Activated CD4-positive, alpha-beta T cell treated with anti-CD3 and anti-CD28 coated beads for 36 hours (primary cell): ENCODE measurements at regions of chr14 and their contacts with region 1.

Region 1: GRCh38 chr14:70809543-70810244 is 381 bp upstream of the MAP3K9 start:
- DNase-seq: peak; percentile 96
- ATAC-seq: peak; percentile 87
- H3K4me3 Mint-ChIP-seq: no peak overlapping the region
- H3K27ac Mint-ChIP-seq: peak overlapping the region; percentile 20
- H3K4me1 Mint-ChIP-seq: peaks cover 4% of the 10 kb centered on the region
- H3K27me3 Mint-ChIP-seq: no peaks in the 10 kb centered on the region

Region 2: DNA sequence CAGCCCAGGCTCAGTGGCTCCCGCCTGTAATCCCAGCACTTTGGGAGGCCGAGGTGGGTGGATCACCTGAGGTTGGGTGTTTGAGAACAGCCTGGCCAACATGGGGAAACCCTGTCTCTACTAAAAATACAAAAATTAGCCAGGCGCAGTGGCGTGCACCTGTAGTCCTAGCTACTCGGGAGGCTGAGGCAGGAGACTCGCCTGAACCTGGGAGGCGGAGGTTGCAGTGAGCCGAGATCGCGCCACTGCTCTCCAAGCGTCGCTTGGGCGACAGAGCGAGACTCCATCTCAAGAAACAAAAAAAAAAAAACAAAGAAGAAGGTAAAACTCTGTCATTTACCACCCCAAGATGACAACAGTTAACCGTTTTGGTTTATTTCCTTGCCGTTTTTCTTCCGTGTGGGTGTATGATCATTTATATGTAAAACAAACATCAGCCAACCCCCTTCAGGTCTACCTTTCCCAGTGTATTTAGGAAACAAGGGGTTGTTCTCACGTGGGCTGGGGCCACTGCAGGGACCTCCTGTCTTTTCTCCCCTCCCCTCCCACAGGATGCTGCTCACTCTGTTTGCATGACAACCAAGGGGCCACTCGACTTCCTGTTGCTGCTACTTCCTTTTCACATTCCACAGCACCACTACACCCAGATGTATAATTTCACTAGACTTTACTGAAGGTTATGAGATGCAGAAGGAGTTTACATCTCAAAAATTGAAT is 154.4 kb before region 1 on chr14:
- CTCF ChIA-PET with region 1: no interaction called
- POLR2A ChIA-PET with region 1: no interaction called
- intact Hi-C with region 1: loop called (anchors 1 to 5 kb)
- DNase-seq: peak; percentile 82
- ATAC-seq: peak; percentile 80
- H3K4me3 Mint-ChIP-seq: peak overlapping the region; percentile 76
- H3K27ac Mint-ChIP-seq: peak overlapping the region; percentile 99
- H3K4me1 Mint-ChIP-seq: peaks cover 90% of the 10 kb centered on the region
- H3K27me3 Mint-ChIP-seq: no peaks in the 10 kb centered on the region

Region 3: DNA sequence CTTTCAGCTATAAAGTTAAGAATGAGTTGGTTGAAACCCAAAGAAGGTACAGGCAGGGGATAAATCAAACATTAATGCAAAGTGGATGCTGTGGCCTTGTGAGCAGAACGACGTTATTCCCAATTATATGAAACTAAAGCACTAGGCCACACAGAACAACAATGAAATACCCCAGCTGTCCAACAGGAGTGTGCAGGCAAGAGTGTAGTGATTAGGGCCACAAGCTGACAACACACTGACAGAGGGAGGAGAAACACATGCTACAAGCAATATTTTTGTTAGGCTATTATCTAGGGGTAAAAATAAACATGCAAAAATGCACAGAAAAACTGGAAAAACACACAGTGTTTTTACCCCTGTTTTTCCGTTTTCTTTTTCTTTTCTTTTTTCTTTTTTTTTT is 15.4 kb before region 1 on chr14:
- CTCF ChIA-PET with region 1: no interaction called
- POLR2A ChIA-PET with region 1: no interaction called
- intact Hi-C with region 1: no loop called
- DNase-seq: no peak
- ATAC-seq: no peak
- H3K4me3 Mint-ChIP-seq: no peak overlapping the region
- H3K27ac Mint-ChIP-seq: no peak overlapping the region
- H3K4me1 Mint-ChIP-seq: no peaks in the 10 kb centered on the region
- H3K27me3 Mint-ChIP-seq: no peaks in the 10 kb centered on the region